Transverse colon (tissue), 4 donors: ENCODE measurements at regions of chr1 and their contacts with region 1.

Region 1: GRCh38 chr1:230167419-230167852 is 100.4 kb downstream of the GALNT2 start:
- DNase-seq: no peak
- H3K4me3 ChIP-seq: no peak overlapping the region
- H3K27ac ChIP-seq: no peak overlapping the region
- H3K4me1 ChIP-seq: peaks cover 0 to 13% (median 0%) of the 10 kb centered on the region in 4 donors
- H3K27me3 ChIP-seq: no peaks in the 10 kb centered on the region
- CTCF ChIP-seq: peak; percentile 59 to 86 (median 68)
- EP300 ChIP-seq: no peak
- POLR2A ChIP-seq: no peak

Region 2: DNA sequence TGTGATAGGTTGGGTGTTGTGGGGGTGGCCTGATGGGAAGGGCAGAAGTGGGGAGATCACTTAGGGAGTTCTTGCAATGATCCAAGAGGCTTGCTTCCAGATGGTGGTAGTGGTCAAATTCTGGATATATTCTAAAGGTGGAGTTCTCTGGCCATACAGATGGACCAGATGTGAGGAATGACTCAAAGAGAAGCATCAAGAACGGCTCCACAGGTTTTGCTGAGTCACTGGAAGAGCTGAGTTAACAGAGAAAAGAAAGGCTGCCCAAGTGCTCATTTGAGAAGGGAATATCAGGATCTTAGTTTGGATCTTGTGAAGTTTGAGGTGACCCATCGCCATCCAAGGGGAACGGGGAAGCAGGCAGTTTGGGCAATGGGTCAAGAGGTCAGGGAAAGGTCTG is 293.3 kb before region 1 on chr1:
- in situ Hi-C with region 1: no loop called
- intact Hi-C with region 1: no loop called
- DNase-seq: no peak
- H3K4me3 ChIP-seq: no peak overlapping the region
- H3K27ac ChIP-seq: no peak overlapping the region
- H3K4me1 ChIP-seq: peaks cover 0 to 6% (median 5%) of the 10 kb centered on the region in 4 donors
- H3K27me3 ChIP-seq: no peaks in the 10 kb centered on the region
- CTCF ChIP-seq: no peak
- EP300 ChIP-seq: no peak
- POLR2A ChIP-seq: no peak

Region 3: DNA sequence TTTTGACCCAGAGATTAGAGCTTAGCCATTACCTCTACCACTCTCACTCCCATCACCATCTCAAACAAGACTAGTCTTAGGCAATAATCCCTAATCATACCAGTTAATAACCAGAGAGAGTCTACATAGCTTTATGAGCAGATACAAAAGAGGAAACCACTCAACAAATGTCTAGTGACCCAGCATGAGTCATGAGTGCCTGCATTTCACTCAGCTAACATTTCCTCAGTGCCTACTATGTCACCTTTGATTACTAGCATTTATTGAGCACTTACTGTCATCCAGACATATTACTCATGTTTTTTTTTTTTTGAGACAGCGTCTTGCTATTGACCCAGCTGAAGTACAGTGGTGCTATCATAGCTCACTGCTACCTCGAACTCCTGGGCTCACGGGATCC is 136.3 kb before region 1 on chr1:
- in situ Hi-C with region 1: no loop called
- intact Hi-C with region 1: no loop called
- DNase-seq: no peak
- H3K4me3 ChIP-seq: no peak overlapping the region
- H3K27ac ChIP-seq: no peak overlapping the region
- H3K4me1 ChIP-seq: no peaks in the 10 kb centered on the region
- H3K27me3 ChIP-seq: no peaks in the 10 kb centered on the region
- CTCF ChIP-seq: no peak
- EP300 ChIP-seq: no peak
- POLR2A ChIP-seq: no peak

Region 4: GRCh38 chr1:230212405-230212936 is 45.0 kb after region 1 on chr1:
- in situ Hi-C with region 1: no loop called
- intact Hi-C with region 1: loop called (anchors 2 kb)
- DNase-seq: peak; percentile 46
- H3K4me3 ChIP-seq: no peak overlapping the region
- H3K27ac ChIP-seq: peak overlapping the region; percentile 49 to 64 (median 62)
- H3K4me1 ChIP-seq: peaks cover 0 to 57% (median 18%) of the 10 kb centered on the region in 4 donors
- H3K27me3 ChIP-seq: no peaks in the 10 kb centered on the region
- CTCF ChIP-seq: no peak
- EP300 ChIP-seq: no peak
- POLR2A ChIP-seq: no peak